ENCODE measurements at regions of chr1 and their contacts with region 1.

Region 1: GRCh38 chr1:67500413-67500959 is 70.3 kb upstream of the SERBP1 start:
- DNase-seq: peak; percentile 73 to 91 (median 81)
- ATAC-seq: peak; percentile 100
- H3K4me3 ChIP-seq: no peak overlapping the region
- H3K4me3 Mint-ChIP-seq: no peak overlapping the region
- H3K27ac ChIP-seq: no peak overlapping the region
- H3K27ac Mint-ChIP-seq: no peak overlapping the region
- H3K4me1 ChIP-seq: no peaks in the 10 kb centered on the region
- H3K4me1 Mint-ChIP-seq: peaks cover 4% of the 10 kb centered on the region
- H3K27me3 ChIP-seq: peaks cover 0 to 7% of the 10 kb centered on the region in 2 experiments
- H3K27me3 Mint-ChIP-seq: peaks cover 13% of the 10 kb centered on the region
- CTCF ChIP-seq: peak; percentile 95

Region 2: DNA sequence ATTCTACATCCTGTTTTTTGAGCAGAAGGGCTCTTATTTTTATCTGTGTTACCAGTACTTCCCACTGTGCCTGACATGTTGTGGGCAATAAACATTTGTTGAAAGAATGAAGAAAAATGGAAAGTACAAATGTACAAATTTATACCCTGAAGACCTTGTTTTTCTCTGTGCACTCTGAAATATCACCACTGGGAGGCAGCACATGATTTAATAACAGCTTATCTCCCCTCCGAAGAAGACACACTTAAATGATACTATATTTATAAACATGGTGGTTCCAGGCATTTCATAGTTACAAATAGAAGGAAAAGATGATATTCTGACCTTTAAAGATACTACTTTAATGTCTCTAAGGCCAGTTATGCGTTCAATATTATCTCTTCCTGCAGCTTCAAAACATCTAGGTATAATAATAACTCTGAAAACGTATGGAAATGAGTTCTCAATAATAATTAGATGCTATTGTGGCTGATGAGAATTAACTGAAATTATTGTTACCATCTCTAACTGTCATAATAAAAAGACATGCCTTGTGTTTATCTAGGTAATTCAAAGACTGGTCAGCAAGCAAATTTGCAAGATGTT is 735.4 kb before region 1 on chr1:
- CTCF ChIA-PET with region 1: interaction called, 3 read pairs
- POLR2A ChIA-PET with region 1: no interaction called
- intact Hi-C with region 1: loop called (anchors 2 kb)
- DNase-seq: peak; percentile 5 to 73 (median 53)
- ATAC-seq: peak; percentile 83
- H3K4me3 ChIP-seq: no peak overlapping the region
- H3K4me3 Mint-ChIP-seq: no peak overlapping the region
- H3K27ac ChIP-seq: no peak overlapping the region
- H3K27ac Mint-ChIP-seq: no peak overlapping the region
- H3K4me1 ChIP-seq: no peaks in the 10 kb centered on the region
- H3K4me1 Mint-ChIP-seq: peaks cover 15% of the 10 kb centered on the region
- H3K27me3 ChIP-seq: no peaks in the 10 kb centered on the region
- H3K27me3 Mint-ChIP-seq: no peaks in the 10 kb centered on the region
- CTCF ChIP-seq: peak; percentile 84

Region 3: DNA sequence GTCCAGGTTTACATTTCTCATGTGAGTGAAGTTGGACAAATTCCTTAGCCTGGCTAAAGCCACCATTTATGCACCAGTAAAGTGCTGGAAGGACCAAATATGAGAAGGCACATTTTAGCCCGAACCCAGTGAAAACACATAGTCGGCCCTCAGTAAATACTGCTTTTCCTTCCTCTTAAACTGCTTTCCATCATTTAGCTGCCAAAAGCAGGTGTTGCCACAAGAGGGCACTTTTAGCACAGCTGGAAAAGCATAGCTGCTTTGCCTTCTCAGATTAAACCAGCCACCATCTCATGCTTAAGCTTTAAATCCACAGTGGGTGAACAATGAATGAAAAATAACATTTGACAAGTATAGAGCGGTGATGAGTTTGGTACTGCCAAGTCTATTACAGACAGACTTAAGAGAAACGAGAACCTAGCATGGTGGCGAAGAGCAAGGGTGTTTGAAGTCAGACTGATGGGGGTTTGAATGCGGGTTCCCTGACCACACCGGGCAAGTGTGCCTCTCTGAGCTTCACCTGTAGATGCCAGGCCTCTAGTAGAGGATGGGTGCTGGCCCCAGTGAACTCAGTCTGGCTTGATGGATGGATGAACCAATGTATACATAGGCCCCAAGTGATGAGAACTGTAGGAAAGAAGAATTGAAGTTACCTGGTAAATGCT is 504.3 kb before region 1 on chr1:
- CTCF ChIA-PET with region 1: interaction called, 10 read pairs
- POLR2A ChIA-PET with region 1: no interaction called
- intact Hi-C with region 1: loop called (anchors 2 to 10 kb)
- DNase-seq: peak; percentile 29 to 74 (median 57)
- ATAC-seq: peak; percentile 86
- H3K4me3 ChIP-seq: no peak overlapping the region
- H3K4me3 Mint-ChIP-seq: no peak overlapping the region
- H3K27ac ChIP-seq: no peak overlapping the region
- H3K27ac Mint-ChIP-seq: peak overlapping the region; percentile 32
- H3K4me1 ChIP-seq: peaks cover 5% of the 10 kb centered on the region
- H3K4me1 Mint-ChIP-seq: peaks cover 21% of the 10 kb centered on the region
- H3K27me3 ChIP-seq: no peaks in the 10 kb centered on the region
- H3K27me3 Mint-ChIP-seq: no peaks in the 10 kb centered on the region
- CTCF ChIP-seq: peak; percentile 70

Region 4: DNA sequence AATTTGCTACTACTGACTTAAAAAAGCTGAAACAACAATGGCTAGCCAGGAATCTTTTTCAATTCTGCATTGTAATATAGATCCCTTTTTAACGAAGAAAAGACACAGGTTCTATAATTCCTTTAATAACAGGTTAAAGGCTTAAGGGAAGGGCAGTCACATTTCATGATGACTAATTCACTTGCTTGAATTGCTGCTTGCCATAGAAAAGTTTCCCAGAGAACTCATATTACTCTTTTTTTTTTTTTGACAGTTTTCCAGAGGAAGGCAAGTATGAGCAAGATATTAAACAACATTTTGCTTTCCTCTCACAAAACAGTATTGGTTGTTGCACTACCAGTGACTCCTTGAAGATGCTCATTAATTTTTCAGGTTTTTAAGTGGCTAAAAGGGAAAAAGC is 273.3 kb before region 1 on chr1:
- CTCF ChIA-PET with region 1: interaction called, 12 read pairs
- POLR2A ChIA-PET with region 1: no interaction called
- intact Hi-C with region 1: no loop called
- DNase-seq: no peak
- ATAC-seq: no peak
- H3K4me3 ChIP-seq: no peak overlapping the region
- H3K4me3 Mint-ChIP-seq: no peak overlapping the region
- H3K27ac ChIP-seq: no peak overlapping the region
- H3K27ac Mint-ChIP-seq: no peak overlapping the region
- H3K4me1 ChIP-seq: no peaks in the 10 kb centered on the region
- H3K4me1 Mint-ChIP-seq: peaks cover 2% of the 10 kb centered on the region
- H3K27me3 ChIP-seq: no peaks in the 10 kb centered on the region
- H3K27me3 Mint-ChIP-seq: peaks cover 7% of the 10 kb centered on the region
- CTCF ChIP-seq: no peak

Region 5: DNA sequence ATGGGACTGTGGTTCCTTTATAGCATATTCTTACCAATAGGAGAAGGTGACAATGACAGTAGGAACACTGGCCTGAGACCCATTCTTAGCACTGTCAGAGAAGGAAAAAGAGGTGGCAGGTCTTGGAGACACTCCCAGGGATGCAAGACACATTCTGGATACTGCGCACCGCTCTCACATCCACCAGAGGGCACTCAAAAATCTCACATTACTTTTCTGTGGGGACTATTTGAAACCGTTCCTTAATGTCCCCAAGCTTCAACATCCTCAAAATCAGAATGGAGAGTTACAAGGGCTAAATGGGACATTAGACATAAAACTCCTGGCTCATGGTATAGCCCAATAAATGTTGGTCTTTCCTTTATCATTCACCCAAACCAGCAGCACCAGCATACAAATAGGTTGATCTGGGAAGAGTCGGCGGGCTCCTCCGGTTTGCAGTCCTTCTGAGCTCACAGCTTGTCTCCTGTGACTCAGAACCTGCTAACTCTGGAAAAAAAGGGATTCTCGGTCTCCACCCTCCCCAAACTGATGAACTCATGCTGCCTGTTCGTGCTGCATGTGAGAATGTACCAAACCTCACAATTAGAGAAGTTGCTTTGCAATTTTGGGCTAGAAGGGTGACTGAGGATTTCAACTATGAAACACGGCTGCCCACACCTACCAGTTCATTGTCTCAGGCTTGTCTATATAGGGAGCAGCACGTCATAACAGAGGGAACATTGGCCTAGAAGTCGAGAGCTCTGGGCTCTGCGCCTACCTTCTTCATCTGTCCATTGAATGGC is 152.6 kb before region 1 on chr1:
- CTCF ChIA-PET with region 1: interaction called, 35 read pairs
- POLR2A ChIA-PET with region 1: interaction called, 3 read pairs
- intact Hi-C with region 1: loop called (anchors 1 kb)
- DNase-seq: peak in 2 of 9 experiments; percentile 26 to 44
- ATAC-seq: no peak
- H3K4me3 ChIP-seq: no peak overlapping the region
- H3K4me3 Mint-ChIP-seq: no peak overlapping the region
- H3K27ac ChIP-seq: no peak overlapping the region
- H3K27ac Mint-ChIP-seq: no peak overlapping the region
- H3K4me1 ChIP-seq: no peaks in the 10 kb centered on the region
- H3K4me1 Mint-ChIP-seq: peaks cover 8% of the 10 kb centered on the region
- H3K27me3 ChIP-seq: no peaks in the 10 kb centered on the region
- H3K27me3 Mint-ChIP-seq: no peaks in the 10 kb centered on the region
- CTCF ChIP-seq: peak; percentile 31

Region 6: GRCh38 chr1:67489643-67490042 is 10.8 kb before region 1 on chr1:
- CTCF ChIA-PET with region 1: interaction called, 23 read pairs
- POLR2A ChIA-PET with region 1: no interaction called
- intact Hi-C with region 1: no loop called
- DNase-seq: peak in 2 of 9 experiments; percentile 33 to 46
- ATAC-seq: no peak
- H3K4me3 ChIP-seq: no peak overlapping the region
- H3K4me3 Mint-ChIP-seq: no peak overlapping the region
- H3K27ac ChIP-seq: no peak overlapping the region
- H3K27ac Mint-ChIP-seq: no peak overlapping the region
- H3K4me1 ChIP-seq: no peaks in the 10 kb centered on the region
- H3K4me1 Mint-ChIP-seq: no peaks in the 10 kb centered on the region
- H3K27me3 ChIP-seq: no peaks in the 10 kb centered on the region
- H3K27me3 Mint-ChIP-seq: no peaks in the 10 kb centered on the region
- CTCF ChIP-seq: no peak